ENCODE measurements at regions of chr15 and their contacts with region 1.

Region 1: GRCh38 chr15:75684642-75685041 is 28.0 kb downstream of the CSPG4 start:
- DNase-seq: no peak
- ATAC-seq: no peak
- H3K4me3 ChIP-seq: no peak overlapping the region
- H3K27ac ChIP-seq: no peak overlapping the region
- H3K4me1 ChIP-seq: no peaks in the 10 kb centered on the region
- H3K27me3 ChIP-seq: no peaks in the 10 kb centered on the region
- CTCF ChIP-seq: no peak
- POLR2A ChIP-seq: no peak
- RAD21 ChIP-seq: no peak

Region 2: DNA sequence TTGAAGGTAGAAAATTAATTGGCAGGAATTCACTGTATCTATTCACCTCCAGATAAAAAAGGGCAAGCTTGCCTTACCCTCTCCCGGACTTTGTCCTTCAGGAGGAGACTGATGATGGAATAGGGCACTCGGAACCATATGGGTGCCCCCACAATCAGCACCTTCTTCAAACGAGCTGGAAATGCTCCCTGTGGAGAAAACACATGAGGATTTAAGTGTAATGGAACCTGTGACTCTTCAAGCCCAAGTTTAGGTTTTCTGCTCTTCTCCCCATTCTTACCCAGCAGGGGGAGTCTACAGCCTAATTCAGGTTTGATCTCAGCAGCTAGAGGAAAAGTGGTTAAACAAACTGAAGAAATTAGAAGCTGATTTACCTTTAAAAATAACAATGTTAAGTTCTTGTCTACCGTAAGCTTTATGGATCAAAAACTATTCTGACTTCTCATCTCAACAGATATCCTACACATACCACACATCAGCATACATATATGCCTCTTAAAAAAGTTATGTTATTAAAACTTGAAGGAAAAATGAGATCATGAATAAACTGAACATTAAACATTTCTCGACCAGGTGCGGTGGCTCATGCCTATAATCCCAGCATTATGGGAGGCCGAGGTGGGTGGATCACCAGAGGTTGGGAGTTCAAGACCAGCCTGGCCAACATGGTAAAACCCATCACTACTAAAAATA is 175.7 kb before region 1 on chr15:
- CTCF ChIA-PET with region 1: no interaction called
- POLR2A ChIA-PET with region 1: no interaction called
- dilution Hi-C with region 1: no loop called
- in situ Hi-C with region 1: no loop called
- intact Hi-C with region 1: loop called (anchors 1 kb)
- DNase-seq: peak; percentile 65
- ATAC-seq: peak; percentile 66
- H3K4me3 ChIP-seq: no peak overlapping the region
- H3K27ac ChIP-seq: no peak overlapping the region
- H3K4me1 ChIP-seq: no peaks in the 10 kb centered on the region
- H3K27me3 ChIP-seq: no peaks in the 10 kb centered on the region
- CTCF ChIP-seq: peak; percentile 58
- POLR2A ChIP-seq: no peak
- RAD21 ChIP-seq: peak; percentile 65

Region 3: DNA sequence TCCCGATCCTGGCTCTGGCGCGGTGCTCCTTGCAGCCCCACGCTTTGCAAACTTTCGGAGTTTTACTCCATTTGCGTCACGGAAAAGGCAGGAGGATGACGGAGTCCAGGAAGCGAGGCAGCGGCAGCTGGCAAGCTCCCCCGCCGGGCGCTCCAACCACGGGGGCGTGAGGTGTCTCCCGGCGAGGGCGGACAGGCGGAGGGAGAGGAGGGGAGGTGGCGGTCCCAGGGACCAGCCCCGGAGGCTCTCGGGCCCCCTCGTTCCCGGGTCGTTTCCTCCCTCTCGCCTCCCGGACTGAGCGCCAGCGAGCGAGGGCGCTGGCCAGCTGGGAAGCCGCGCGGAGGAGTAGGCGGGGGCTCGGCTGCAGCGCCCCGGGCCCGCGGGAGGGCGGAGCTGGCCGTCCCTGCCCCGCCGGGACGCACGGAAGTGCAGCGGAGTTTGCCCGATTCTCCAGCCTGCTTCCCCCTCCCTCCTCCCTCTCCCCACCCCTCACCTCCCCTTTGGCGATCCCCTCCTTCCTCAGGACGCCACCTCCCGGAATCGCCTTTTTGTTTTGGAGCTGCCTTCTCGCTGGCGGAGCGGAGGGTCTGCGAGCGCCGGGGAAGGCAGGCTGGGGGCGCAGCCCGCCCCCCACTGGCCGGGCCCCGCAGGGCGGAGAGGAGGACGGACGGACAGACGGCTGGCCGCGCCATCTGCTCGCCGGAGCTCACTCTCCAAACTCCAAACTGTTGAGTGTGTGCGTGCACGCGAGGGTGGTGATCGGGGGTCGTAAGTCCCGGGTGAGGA is 37.1 kb before region 1 on chr15 and contains the start of gene SNX33:
- CTCF ChIA-PET with region 1: interaction called, 4 read pairs
- POLR2A ChIA-PET with region 1: no interaction called
- dilution Hi-C with region 1: no loop called
- in situ Hi-C with region 1: no loop called
- intact Hi-C with region 1: loop called (anchors 1 kb)
- DNase-seq: peak; percentile 89
- ATAC-seq: peak; percentile 81
- H3K4me3 ChIP-seq: peak within 1 kb of the TSS; percentile 88
- H3K27ac ChIP-seq: peak within 1 kb of the TSS; percentile 94
- H3K4me1 ChIP-seq: peaks cover 37% of the 10 kb centered on the region
- H3K27me3 ChIP-seq: no peaks in the 10 kb centered on the region
- CTCF ChIP-seq: peak; percentile 49
- POLR2A ChIP-seq: peak; percentile 84
- RAD21 ChIP-seq: peak; percentile 24; the same call in 1 of the 2 replicates
- total RNA-seq, gene SNX33: 11.9 and 12.7 TPM in 2 replicates

Region 4: GRCh38 chr15:75801859-75802593 is 117.4 kb after region 1 on chr15:
- CTCF ChIA-PET with region 1: no interaction called
- POLR2A ChIA-PET with region 1: no interaction called
- dilution Hi-C with region 1: no loop called
- in situ Hi-C with region 1: loop called (anchors 5 kb)
- intact Hi-C with region 1: loop called (anchors 1 kb)
- DNase-seq: peak; percentile 54
- ATAC-seq: peak; percentile 100
- H3K4me3 ChIP-seq: peak overlapping the region; percentile 35; the same call in 1 of the 2 replicates
- H3K27ac ChIP-seq: no peak overlapping the region
- H3K4me1 ChIP-seq: no peaks in the 10 kb centered on the region
- H3K27me3 ChIP-seq: peaks cover 38% of the 10 kb centered on the region
- CTCF ChIP-seq: peak; percentile 82
- POLR2A ChIP-seq: no peak
- RAD21 ChIP-seq: peak; percentile 89

Region 5: GRCh38 chr15:76309601-76310474 is 625.2 kb after region 1 on chr15:
- CTCF ChIA-PET with region 1: no interaction called
- POLR2A ChIA-PET with region 1: no interaction called
- dilution Hi-C with region 1: no loop called
- in situ Hi-C with region 1: no loop called
- intact Hi-C with region 1: no loop called
- DNase-seq: no peak
- ATAC-seq: no peak
- H3K4me3 ChIP-seq: peak overlapping the region; percentile 82
- H3K27ac ChIP-seq: no peak overlapping the region
- H3K4me1 ChIP-seq: peaks cover 10% of the 10 kb centered on the region
- H3K27me3 ChIP-seq: no peaks in the 10 kb centered on the region
- CTCF ChIP-seq: no peak
- POLR2A ChIP-seq: no peak
- RAD21 ChIP-seq: no peak

Measured in IMR-90 (cell line).